Posterior vena cava (tissue), 2 donors: ENCODE measurements at regions of chr5 and their contacts with region 1.

Region 1: GRCh38 chr5:158364367-158364766 is 505.4 kb upstream of the CLINT1 start:
- DNase-seq: no peak

Region 2: DNA sequence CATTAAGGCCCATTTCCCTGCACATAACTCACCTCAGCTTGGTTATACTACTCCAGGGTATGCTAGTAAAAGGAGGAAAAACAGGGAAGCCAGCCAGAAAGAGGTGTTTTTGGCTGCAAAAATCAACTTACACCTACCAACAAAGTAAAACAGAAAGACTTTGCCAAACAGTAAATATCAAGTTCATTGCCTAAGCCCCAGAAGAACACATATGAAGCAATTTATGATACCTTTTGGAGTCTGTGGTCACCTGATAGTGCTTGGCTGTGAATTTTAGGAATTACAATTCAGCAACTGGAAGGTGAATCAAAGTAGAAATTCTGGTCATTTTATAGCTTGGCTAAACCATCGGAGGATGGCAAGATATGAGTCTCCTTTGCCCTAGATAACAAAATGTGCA is 41.7 kb before region 1 on chr5:
- intact Hi-C with region 1: loop called in 1 of 2 experiments (anchors 1 kb)
- DNase-seq: no peak

Region 3: GRCh38 chr5:158349987-158350386 is 14.4 kb before region 1 on chr5:
- intact Hi-C with region 1: no loop called
- DNase-seq: no peak

Region 4: DNA sequence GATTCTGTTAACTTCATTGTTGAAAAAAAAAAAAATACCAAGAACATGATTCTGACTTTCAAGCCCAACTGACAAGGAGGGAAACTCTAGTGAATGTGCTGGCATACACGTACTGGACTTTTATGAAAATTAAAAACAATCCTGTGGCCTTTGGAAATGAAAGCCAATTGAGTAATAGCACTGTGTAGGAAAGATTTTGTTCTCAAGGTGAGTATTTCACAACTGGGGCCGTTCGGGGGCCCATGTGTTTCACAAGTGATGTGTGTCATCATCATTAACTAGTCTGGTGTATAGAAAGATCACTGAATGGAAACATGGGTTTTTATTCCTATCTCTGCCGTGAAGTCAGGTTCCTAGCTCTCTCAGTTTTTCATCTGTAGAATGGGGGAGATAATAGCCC is 99.6 kb after region 1 on chr5:
- intact Hi-C with region 1: no loop called
- DNase-seq: peak; percentile 84